Activated naive CD4-positive, alpha-beta T cell treated with anti-CD3 and anti-CD28 coated beads for 36 hours (primary cell): ENCODE measurements at regions of chr3 and their contacts with region 1.

Region 1: DNA sequence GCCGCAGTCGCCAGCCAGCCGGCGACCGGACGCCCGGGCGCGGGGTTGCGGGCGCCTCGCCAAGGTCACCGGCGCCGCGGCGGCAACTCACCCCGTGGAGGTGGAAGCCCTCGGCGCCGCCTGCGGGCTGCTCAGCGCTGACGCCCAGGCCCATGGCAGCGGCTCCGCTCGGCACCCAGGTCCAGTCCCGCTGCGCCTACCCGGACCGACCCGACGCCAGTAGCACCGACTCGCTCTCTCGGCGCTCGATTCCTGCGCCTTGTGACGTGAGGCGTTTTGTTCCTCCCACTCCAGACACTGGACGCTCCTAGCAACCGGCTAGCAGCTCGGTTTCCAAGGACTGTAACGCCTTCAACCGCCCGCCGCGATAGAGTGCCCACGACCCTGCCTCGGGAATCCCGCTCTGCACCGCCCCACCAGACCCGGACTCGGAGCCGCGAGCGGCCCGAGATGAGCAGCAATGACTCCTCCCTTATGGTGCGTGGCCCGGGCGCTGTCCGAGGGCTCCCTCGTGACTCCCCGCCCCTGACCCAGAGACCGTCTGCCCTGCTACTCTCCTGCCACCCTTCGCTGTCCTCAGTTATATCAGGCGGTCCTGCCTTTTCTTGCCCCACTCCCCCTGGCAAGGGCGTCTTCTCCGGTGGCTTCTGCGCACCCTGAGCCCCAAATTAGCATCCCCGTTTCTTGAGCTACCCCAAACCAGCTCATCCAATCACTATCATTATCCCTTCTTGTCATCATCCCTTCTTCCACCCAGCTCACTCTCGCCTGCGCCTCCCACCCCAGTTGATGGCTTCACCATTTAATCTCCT is at the starts of genes GORASP1 and TTC21A:
- DNase-seq: peak; percentile 79
- H3K4me3 Mint-ChIP-seq: peak within 1 kb of the TSS; percentile 83
- H3K27ac Mint-ChIP-seq: peak within 1 kb of the TSS; percentile 57
- H3K4me1 Mint-ChIP-seq: peaks cover 42% of the 10 kb centered on the region
- H3K27me3 Mint-ChIP-seq: no peaks in the 10 kb centered on the region
- total RNA-seq, gene GORASP1: 19.0 to 21.8 TPM
- total RNA-seq, gene TTC21A: 1.5 to 1.6 TPM

Region 2: DNA sequence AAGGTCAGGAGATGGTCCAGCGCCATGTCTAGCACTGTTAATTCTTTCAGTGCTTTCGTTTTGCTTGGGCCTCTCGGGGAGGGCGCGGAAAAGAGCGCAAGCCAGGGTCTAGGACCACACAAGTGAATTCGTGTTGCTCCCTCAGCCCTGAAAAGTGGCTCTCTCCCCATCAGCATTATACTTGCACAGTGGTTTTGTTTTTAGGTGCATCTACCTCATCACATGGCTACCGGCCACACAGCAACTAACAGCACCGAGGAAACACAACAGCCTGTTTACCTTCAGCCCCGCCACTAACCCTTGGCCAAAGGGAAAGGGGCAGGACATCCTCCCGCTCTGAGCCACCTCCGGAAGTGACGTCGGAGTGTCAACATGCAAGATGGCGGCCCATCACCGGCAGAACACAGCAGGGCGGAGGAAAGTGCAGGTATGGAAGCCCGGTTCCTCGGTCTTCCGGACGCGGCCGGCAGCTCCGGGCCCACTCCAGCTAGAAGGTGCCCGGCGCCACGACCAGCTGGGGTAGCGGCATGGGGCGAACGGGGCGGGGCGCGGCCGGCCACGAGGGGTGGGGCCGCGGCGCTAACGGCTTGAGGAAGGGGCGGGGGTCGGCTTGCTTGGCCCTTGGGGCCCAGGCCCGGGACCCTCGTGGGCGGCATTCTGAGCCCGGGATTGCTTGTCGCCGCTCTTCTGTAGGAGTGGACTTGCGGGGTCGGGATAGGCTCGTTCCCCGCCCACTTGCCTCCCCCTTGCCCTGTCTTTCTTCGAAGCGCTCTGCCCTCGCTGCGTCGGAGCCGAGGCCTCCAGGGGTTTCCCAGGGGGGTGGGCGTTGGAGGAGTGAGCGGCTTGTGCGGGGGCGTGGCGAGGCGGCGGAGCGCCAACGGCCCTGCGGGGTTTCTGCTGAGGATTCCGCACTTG is 55.7 kb before region 1 on chr3 and contains the starts of genes SCN11A and WDR48:
- CTCF ChIA-PET with region 1: no interaction called
- intact Hi-C with region 1: loop called (anchors 2 kb)
- DNase-seq: peak; percentile 97
- H3K4me3 Mint-ChIP-seq: peak within 1 kb of the TSS; percentile 96
- H3K27ac Mint-ChIP-seq: peak within 1 kb of the TSS; percentile 98
- H3K4me1 Mint-ChIP-seq: peaks cover 50% of the 10 kb centered on the region
- H3K27me3 Mint-ChIP-seq: no peaks in the 10 kb centered on the region
- total RNA-seq, gene SCN11A: 0.05 TPM
- total RNA-seq, gene WDR48: 32.3 to 32.9 TPM

Region 3: DNA sequence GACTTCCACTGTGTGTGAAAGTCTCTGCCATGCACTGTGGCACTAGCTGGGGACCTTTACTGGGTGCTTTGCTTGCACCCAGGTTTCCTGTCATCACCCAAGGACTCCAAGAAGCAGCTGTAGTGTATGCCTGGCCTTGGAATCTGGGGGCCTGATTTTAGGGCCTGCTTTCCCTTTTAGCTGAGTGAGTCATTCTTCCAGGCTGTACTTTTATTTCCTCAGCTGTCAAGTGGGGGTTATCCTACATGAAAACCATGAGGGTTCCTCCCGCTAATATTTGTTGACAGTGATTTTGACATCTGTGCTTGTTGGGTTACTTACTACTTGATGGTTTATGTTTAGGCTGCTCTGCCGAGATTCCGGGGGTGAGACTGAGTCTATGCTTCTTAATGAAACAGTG is 18.7 kb before region 1 on chr3:
- CTCF ChIA-PET with region 1: no interaction called
- intact Hi-C with region 1: loop called (anchors 1 kb)
- DNase-seq: no peak
- H3K4me3 Mint-ChIP-seq: no peak overlapping the region
- H3K27ac Mint-ChIP-seq: no peak overlapping the region
- H3K4me1 Mint-ChIP-seq: no peaks in the 10 kb centered on the region
- H3K27me3 Mint-ChIP-seq: no peaks in the 10 kb centered on the region

Region 4: GRCh38 chr3:39146984-39147591 is 39.5 kb after region 1 on chr3:
- CTCF ChIA-PET with region 1: interaction called, 11 read pairs
- intact Hi-C with region 1: loop called (anchors 1 kb)
- DNase-seq: peak; percentile 92
- H3K4me3 Mint-ChIP-seq: peak overlapping the region; percentile 99
- H3K27ac Mint-ChIP-seq: peak overlapping the region; percentile 98
- H3K4me1 Mint-ChIP-seq: peaks cover 70% of the 10 kb centered on the region
- H3K27me3 Mint-ChIP-seq: no peaks in the 10 kb centered on the region

Region 5: GRCh38 chr3:39208463-39209055 is 101.0 kb after region 1 on chr3:
- CTCF ChIA-PET with region 1: no interaction called
- intact Hi-C with region 1: loop called (anchors 2 kb)
- DNase-seq: peak; percentile 72
- H3K4me3 Mint-ChIP-seq: no peak overlapping the region
- H3K27ac Mint-ChIP-seq: no peak overlapping the region
- H3K4me1 Mint-ChIP-seq: peaks cover 8% of the 10 kb centered on the region
- H3K27me3 Mint-ChIP-seq: no peaks in the 10 kb centered on the region

Region 6: GRCh38 chr3:39569095-39569494 is 461.5 kb after region 1 on chr3:
- CTCF ChIA-PET with region 1: no interaction called
- intact Hi-C with region 1: no loop called
- DNase-seq: no peak
- H3K4me3 Mint-ChIP-seq: no peak overlapping the region
- H3K27ac Mint-ChIP-seq: no peak overlapping the region
- H3K4me1 Mint-ChIP-seq: no peaks in the 10 kb centered on the region
- H3K27me3 Mint-ChIP-seq: peaks cover 6% of the 10 kb centered on the region